Activated T-helper 1 cell treated with anti-CD3 and anti-CD28 coated beads, Interleukin-12 subunit alpha, Interleukin-12 subunit beta, Interleukin-2, Interleukin-4 antibody, amounts not matched to agents 30 ng/mL and 10 ng/mL and 1 ng/mL, durations not matched to agents 14 hours and 24 hours and 36 hours (primary cell): ENCODE measurements at regions of chr6 and their contacts with region 1.

Region 1: DNA sequence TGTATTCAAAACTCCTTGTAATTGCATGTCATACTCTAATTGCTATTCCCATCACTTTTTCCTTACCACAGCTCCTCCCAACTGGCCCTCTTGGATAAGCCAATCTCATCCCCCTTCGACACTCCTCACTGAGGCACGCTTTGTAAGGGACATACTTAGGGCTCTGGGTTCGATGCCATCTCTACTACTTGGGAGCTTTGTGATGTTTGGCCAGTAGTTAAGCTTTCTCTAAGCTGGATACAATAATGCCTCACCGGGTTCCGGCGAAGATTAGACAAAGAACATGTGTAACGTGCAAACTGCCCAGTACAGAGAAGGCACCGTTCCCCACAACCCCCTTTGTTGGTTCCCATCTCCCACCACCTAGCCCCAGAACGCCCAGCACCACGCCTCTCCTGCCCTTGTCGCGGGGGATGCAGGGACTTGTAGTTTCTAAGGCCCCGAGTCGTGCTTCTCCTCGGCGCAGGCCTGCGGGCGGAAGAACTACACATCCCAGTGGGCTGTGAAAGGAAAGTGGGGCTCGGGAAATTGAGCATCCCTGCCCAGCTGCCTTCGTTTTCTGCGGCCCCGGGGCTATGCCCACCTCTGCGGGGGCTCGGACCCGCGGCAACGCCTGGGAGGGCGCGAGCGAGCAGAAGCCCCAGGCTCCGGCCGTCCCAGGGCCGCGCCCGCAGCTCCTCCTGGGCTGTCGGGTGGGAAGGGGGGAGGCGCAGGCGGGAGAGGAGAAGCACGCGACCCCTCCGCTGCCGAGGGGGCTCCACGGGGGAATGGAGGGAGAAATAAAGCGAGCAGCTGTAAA is 1.1 kb upstream of the ZDHHC14 start:
- DNase-seq: peak; percentile 86
- H3K4me3 Mint-ChIP-seq: peak overlapping the region; percentile 88
- H3K27ac Mint-ChIP-seq: peak overlapping the region; percentile 83
- H3K4me1 Mint-ChIP-seq: peaks cover 39% of the 10 kb centered on the region
- H3K27me3 Mint-ChIP-seq: peaks cover 6% of the 10 kb centered on the region

Region 2: DNA sequence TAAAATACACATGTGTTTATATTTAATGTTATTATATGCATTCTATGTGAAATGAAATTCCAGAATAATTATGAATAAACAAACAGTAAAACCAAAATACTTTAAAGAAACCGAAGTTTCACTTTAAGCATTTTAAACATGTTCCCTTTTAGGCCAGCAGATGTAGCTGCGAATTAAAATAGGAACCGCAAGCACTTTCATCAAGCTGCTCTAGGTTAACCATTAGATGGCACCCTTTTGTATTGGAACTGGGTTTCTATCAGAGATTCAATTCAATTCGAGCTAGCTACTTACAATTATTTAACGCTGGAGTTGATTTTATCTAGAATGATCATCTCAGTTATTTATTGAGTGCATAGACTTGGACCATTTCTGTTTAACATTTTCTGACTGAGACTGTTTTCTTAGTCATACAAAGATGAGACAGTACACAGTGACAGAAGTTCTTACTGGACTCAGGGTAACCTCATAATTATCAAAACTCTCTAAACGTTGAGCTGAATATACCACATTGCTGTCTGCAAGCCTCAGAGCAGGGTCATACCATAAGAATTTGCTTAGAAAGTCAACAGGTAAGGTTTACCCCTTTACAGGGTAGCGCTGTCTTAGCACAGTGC is 65.0 kb before region 1 on chr6:
- intact Hi-C with region 1: loop called (anchors 2 kb)
- DNase-seq: peak; percentile 32
- H3K4me3 Mint-ChIP-seq: no peak overlapping the region
- H3K27ac Mint-ChIP-seq: no peak overlapping the region
- H3K4me1 Mint-ChIP-seq: peaks cover 16% of the 10 kb centered on the region
- H3K27me3 Mint-ChIP-seq: no peaks in the 10 kb centered on the region

Region 3: GRCh38 chr6:157428427-157429202 is 48.8 kb after region 1 on chr6:
- intact Hi-C with region 1: loop called (anchors 1 kb)
- DNase-seq: no peak
- H3K4me3 Mint-ChIP-seq: peak overlapping the region; percentile 2
- H3K27ac Mint-ChIP-seq: peak overlapping the region; percentile 77
- H3K4me1 Mint-ChIP-seq: peaks cover 43% of the 10 kb centered on the region
- H3K27me3 Mint-ChIP-seq: peaks cover 3% of the 10 kb centered on the region

Region 4: GRCh38 chr6:157563611-157564284 is 183.9 kb after region 1 on chr6:
- intact Hi-C with region 1: loop called (anchors 10 kb)
- DNase-seq: peak; percentile 20
- H3K4me3 Mint-ChIP-seq: no peak overlapping the region
- H3K27ac Mint-ChIP-seq: no peak overlapping the region
- H3K4me1 Mint-ChIP-seq: peaks cover 41% of the 10 kb centered on the region
- H3K27me3 Mint-ChIP-seq: peaks cover 21% of the 10 kb centered on the region

Region 5: DNA sequence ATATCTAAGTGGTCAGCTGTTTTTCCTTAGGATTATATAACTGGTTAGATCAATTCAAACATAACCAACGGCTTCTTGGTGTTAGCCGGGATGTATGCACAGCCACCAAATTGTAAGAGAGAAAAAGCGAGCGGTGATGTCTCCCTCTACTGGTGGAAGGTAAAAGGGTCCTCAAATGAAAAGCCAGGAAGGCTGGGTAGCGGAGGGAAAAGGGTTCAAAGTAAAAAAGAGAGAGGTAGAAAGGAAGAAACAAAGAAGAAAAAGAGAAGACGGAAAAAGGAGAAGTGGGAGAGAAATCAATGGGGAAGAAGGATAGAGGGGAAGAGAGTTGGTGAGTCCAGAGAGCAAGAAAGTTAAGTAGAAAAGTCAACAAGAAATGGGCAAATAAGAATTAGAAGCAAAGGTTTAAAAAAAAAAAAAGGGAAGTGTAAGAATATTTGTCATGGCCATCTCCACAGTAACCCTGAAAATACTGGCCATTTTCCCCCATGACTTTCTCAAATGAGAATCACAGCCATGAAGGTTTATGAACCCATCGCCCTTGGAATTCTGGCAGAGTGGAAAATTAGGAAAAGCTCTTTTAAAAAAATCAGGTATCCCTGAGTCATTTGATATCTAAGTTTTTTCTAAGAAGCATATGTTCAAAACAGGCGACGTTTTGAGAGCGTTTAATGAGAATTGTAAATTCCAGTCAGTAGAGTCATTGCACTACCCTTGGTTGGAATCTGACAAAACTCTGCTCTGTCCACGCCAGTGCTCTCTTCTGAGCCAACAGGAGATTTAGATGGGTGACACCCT is 287.6 kb after region 1 on chr6:
- intact Hi-C with region 1: loop called (anchors 5 kb)
- DNase-seq: peak; percentile 30
- H3K4me3 Mint-ChIP-seq: no peak overlapping the region
- H3K27ac Mint-ChIP-seq: peak overlapping the region; percentile 41
- H3K4me1 Mint-ChIP-seq: peaks cover 12% of the 10 kb centered on the region
- H3K27me3 Mint-ChIP-seq: peaks cover 10% of the 10 kb centered on the region